K562 (cell line): ENCODE measurements at regions of chr9 and their contacts with region 1.

Region 1: GRCh38 chr9:122904823-122905710 is at the start of gene RC3H2:
- DNase-seq: peak; percentile 93 to 99 (median 94)
- ATAC-seq: peak; percentile 91
- H3K4me3 ChIP-seq: peak within 1 kb of the TSS; percentile 71
- H3K27ac ChIP-seq: peak within 1 kb of the TSS; percentile 91
- H3K4me1 ChIP-seq: peaks cover 3 to 7% of the 10 kb centered on the region in 2 experiments; a peak in 3 of 5 replicates
- H3K27me3 ChIP-seq: no peaks in the 10 kb centered on the region
- CTCF ChIP-seq: no peak; a peak in 1 of 6 replicates
- EP300 ChIP-seq: no peak
- POLR2A ChIP-seq: peak; percentile 92
- RAD21 ChIP-seq: no peak
- polyA plus RNA-seq, gene RC3H2: 5.6 to 8.6 TPM

Region 2: GRCh38 chr9:122835313-122835731 is 69.7 kb before region 1 on chr9:
- CTCF ChIA-PET with region 1: no interaction called
- POLR2A ChIA-PET with region 1: no interaction called
- in situ Hi-C with region 1: no loop called
- intact Hi-C with region 1: no loop called
- DNase-seq: peak in 1 of 4 experiments; percentile 24
- ATAC-seq: peak; percentile 67
- H3K4me3 ChIP-seq: no peak overlapping the region
- H3K27ac ChIP-seq: no peak overlapping the region
- H3K4me1 ChIP-seq: peaks cover 0 to 4% of the 10 kb centered on the region in 2 experiments; a peak in 2 of 5 replicates
- H3K27me3 ChIP-seq: no peaks in the 10 kb centered on the region
- CTCF ChIP-seq: peak in 1 of 3 experiments; percentile 21; a peak in 1 of 6 replicates
- EP300 ChIP-seq: no peak
- POLR2A ChIP-seq: no peak
- RAD21 ChIP-seq: peak in 1 of 2 experiments; percentile 15; a peak in 1 of 4 replicates

Region 3: DNA sequence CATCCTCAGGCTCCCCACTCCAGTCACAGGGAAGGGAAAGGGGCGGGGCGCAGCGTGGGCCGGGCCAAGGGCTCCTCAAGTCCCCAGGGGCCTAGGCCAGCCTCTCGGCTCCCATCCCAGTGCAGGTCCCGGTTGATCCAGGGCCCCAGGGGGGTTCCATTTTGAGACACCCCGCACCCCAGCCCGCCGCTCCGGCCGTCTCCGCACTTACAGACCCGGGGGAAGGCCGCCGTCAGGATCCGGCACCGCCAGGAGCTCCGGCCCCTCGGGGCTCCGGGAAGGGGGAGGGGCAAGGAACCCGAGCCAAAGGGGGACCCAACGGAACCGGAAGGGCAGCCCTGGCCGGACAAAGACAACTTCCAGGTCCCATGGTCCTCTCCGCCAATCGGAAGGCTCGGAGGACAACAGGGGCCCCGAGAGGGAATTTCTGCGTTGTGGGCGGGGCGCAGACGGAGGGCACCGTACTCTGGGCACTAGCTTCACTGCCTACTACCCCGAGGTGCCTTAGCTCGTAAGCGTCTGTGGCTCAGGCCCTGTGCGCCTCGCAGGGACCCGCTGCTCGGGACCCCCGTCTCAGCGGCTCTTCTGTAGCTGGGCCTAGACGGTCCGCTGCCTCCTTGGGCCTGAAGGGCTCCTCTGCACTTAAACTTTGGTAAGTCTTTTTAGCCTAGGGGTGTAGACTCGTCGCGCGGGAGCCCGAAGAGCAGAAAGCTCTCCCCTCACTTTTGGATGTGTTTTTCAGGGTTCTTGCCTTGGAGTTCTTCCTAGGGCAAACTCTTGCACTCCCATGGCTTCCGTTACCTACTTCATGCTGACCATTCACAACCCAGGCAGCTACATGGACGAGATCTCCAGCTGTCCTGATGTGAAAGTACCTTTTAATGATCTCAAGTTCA is 26.4 kb after region 1 on chr9 and contains the start of gene ZBTB26:
- CTCF ChIA-PET with region 1: no interaction called
- POLR2A ChIA-PET with region 1: interaction called, 4 read pairs
- in situ Hi-C with region 1: no loop called
- intact Hi-C with region 1: loop called (anchors 1 kb)
- DNase-seq: peak; percentile 95 to 99 (median 98)
- ATAC-seq: peak; percentile 98
- H3K4me3 ChIP-seq: peak within 1 kb of the TSS; percentile 69
- H3K27ac ChIP-seq: peak within 1 kb of the TSS; percentile 75
- H3K4me1 ChIP-seq: peaks cover 7 to 9% of the 10 kb centered on the region in 2 experiments; a peak in 3 of 5 replicates
- H3K27me3 ChIP-seq: no peaks in the 10 kb centered on the region
- CTCF ChIP-seq: no peak
- EP300 ChIP-seq: 0 out of 2 replicates have a peak, but pooled peaks have one; percentile 8
- POLR2A ChIP-seq: peak; percentile 74
- RAD21 ChIP-seq: no peak
- polyA plus RNA-seq, gene ZBTB26: 2.4 to 5.0 TPM

Region 4: DNA sequence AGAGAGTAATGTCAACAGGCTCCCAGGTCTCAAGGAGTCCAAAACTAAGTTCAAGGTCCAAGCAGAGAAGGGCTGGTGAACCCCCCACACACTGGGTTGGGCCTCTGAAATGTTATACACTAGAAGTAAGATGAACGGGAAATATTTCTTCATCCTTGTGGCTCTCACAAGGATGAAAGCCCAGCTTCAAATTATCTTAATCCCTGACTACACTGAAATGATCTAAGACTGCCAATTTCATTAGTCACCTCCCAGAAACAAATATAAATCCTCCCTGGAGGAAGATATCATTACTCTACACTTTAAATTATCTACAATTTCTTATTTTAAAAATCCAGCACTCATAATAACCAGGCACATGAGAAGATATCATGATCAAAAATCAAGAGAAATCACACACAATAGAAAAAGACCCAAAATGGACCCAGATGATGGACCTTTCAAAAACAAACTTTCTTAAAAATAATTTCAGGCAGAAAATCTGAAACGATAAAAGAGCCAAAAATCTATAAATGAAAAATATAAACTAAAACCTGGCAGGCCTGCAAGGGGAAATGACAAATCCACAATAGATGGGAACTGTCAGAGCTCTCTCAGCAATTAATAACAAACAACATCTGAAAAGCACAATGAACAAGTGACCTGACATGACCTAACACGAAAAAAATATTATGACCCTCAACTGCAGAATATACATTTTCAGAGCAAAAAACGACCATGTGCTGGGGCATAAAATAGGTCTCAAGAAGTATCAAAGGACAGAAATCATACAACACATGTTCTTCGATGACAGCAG is 245.8 kb after region 1 on chr9:
- CTCF ChIA-PET with region 1: no interaction called
- POLR2A ChIA-PET with region 1: no interaction called
- in situ Hi-C with region 1: no loop called
- intact Hi-C with region 1: no loop called
- DNase-seq: no peak
- ATAC-seq: no peak
- H3K4me3 ChIP-seq: no peak overlapping the region
- H3K27ac ChIP-seq: no peak overlapping the region
- H3K4me1 ChIP-seq: no peaks in the 10 kb centered on the region
- H3K27me3 ChIP-seq: no peaks in the 10 kb centered on the region
- CTCF ChIP-seq: no peak
- EP300 ChIP-seq: no peak
- POLR2A ChIP-seq: no peak
- RAD21 ChIP-seq: no peak

Region 5: GRCh38 chr9:123434619-123435528 is 529.8 kb after region 1 on chr9:
- CTCF ChIA-PET with region 1: no interaction called
- POLR2A ChIA-PET with region 1: no interaction called
- in situ Hi-C with region 1: no loop called
- intact Hi-C with region 1: no loop called
- DNase-seq: peak; percentile 38 to 66 (median 54)
- ATAC-seq: peak; percentile 98
- H3K4me3 ChIP-seq: no peak overlapping the region
- H3K27ac ChIP-seq: no peak overlapping the region
- H3K4me1 ChIP-seq: peaks cover 0 to 3% of the 10 kb centered on the region in 2 experiments; a peak in 4 of 5 replicates
- H3K27me3 ChIP-seq: no peaks in the 10 kb centered on the region
- CTCF ChIP-seq: peak; percentile 41 to 57 (median 46); a peak in 3 of 6 replicates
- EP300 ChIP-seq: no peak
- POLR2A ChIP-seq: no peak
- RAD21 ChIP-seq: no peak; a peak in 1 of 4 replicates